Endothelial cell of umbilical vein (primary cell): ENCODE measurements at regions of chr5 and their contacts with region 1.

Region 1: DNA sequence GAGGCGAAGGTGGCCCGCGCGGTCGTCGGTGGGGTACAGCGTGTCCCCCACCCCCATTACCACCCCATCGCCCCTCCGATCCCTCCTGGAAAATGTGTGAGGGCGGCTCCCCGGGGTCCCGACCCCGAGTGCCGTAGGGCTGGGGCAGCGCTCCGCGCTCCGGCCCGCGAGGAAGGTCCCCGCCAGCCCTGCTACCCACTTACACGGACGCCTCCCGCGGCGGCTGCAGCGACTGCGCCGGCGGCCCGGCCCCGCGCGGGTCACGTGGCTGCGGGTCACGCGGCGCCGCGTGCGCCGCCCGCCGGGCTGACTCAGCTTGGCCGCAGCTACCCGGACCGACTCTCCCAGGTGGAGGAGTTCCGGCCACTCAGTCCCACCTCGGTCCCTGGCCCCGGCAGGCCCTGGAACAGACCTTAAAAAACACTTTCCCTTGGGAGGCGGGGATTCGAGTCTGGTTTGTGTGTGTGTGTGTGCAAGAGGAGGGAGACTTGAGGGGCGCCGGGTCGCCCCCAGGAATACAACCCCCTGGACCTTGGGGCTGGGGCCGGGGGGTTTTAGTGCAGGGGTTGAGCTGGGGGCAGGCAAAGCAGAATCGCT is at the start of gene GNPDA1:
- DNase-seq: peak; percentile 67
- H3K4me3 ChIP-seq: peak within 1 kb of the TSS; percentile 51 to 80 (median 69)
- H3K27ac ChIP-seq: peak within 1 kb of the TSS; percentile 83
- H3K4me1 ChIP-seq: peaks cover 45% of the 10 kb centered on the region
- H3K27me3 ChIP-seq: no peaks in the 10 kb centered on the region
- CTCF ChIP-seq: peak in 1 of 2 donors; percentile 9
- POLR2A ChIP-seq: peak; percentile 88
- total RNA-seq, gene GNPDA1: 49.3 and 52.1 TPM in 2 replicates

Region 2: DNA sequence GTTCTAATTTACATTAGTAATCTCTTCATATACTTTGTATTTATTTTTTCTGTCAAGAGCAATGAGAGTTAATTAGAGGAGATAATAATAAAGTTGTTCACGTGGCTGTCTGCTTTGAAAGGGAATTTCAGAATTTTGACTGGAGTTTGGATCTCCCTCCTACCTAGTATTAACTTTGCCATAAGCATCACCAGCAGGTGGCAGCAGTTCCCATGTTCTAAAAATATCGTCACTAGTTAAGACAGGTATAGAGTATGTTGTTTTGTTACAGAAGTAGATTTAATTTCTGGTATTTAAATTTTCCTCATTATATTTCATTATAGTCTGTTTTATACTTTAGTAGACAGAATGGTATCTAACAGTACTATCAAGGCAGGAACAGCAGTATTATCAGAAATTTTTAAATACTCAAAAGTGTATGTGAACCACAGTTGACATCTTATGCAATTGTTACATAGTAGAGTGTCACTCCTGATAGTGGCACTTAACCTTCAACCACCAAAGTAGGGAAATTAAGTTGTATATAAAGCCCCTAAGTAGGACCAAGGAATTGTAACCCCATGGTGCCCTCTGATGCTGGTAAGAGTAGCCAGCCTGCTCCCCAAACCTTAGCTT is 20.4 kb before region 1 on chr5:
- CTCF ChIA-PET with region 1: interaction called, 22 read pairs
- POLR2A ChIA-PET with region 1: interaction called, 3 read pairs
- dilution Hi-C with region 1: no loop called
- intact Hi-C with region 1: no loop called
- DNase-seq: peak; percentile 72
- H3K4me3 ChIP-seq: no peak overlapping the region
- H3K27ac ChIP-seq: no peak overlapping the region
- H3K4me1 ChIP-seq: no peaks in the 10 kb centered on the region
- H3K27me3 ChIP-seq: no peaks in the 10 kb centered on the region
- CTCF ChIP-seq: peak; percentile 45 to 58
- POLR2A ChIP-seq: no peak

Region 3: DNA sequence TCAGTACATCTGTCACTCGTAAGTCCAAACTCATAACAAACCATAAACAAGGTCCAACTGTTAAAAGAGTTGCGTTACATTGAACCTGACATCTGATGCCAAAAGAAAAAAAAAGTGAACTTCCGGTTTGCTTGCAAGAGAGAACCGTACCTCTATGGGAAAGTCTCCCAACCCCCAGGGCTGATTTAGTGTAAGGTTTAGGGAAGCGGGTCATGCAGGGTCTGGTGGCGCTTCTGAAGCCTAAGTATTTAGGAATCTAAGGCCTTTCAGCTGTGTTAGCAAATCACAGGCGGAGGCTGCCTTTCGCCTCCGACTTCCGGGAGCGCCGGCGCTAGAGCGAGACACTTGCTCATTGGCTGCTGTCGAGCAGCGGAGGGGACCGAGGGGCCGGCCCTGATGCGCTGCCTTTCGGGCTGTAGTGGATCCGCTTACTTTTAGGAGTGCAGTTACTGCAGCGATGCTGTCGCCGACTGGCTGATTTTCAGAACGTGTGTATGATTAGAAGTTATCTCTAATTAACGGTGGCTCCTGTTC is 11.9 kb after region 1 on chr5:
- CTCF ChIA-PET with region 1: interaction called, 10 read pairs
- POLR2A ChIA-PET with region 1: no interaction called
- dilution Hi-C with region 1: no loop called
- intact Hi-C with region 1: loop called (anchors 1 kb)
- DNase-seq: peak; percentile 80
- H3K4me3 ChIP-seq: peak overlapping the region; percentile 21 to 64 (median 28)
- H3K27ac ChIP-seq: peak overlapping the region; percentile 59
- H3K4me1 ChIP-seq: peaks cover 8% of the 10 kb centered on the region
- H3K27me3 ChIP-seq: no peaks in the 10 kb centered on the region
- CTCF ChIP-seq: no peak
- POLR2A ChIP-seq: peak; percentile 73

Region 4: GRCh38 chr5:142069606-142070399 is 56.9 kb after region 1 on chr5:
- CTCF ChIA-PET with region 1: no interaction called
- POLR2A ChIA-PET with region 1: no interaction called
- dilution Hi-C with region 1: no loop called
- intact Hi-C with region 1: no loop called
- DNase-seq: no peak
- H3K4me3 ChIP-seq: no peak overlapping the region
- H3K27ac ChIP-seq: no peak overlapping the region
- H3K4me1 ChIP-seq: no peaks in the 10 kb centered on the region
- H3K27me3 ChIP-seq: peaks cover 8 to 10% of the 10 kb centered on the region in 2 experiments
- CTCF ChIP-seq: no peak
- POLR2A ChIP-seq: no peak

Region 5: GRCh38 chr5:142108432-142109330 is 95.8 kb after region 1 on chr5 and contains the start of gene NDFIP1:
- CTCF ChIA-PET with region 1: interaction called, 53 read pairs
- POLR2A ChIA-PET with region 1: interaction called, 7 read pairs
- dilution Hi-C with region 1: no loop called
- intact Hi-C with region 1: loop called (anchors 1 kb)
- DNase-seq: peak; percentile 85
- H3K4me3 ChIP-seq: peak within 1 kb of the TSS; percentile 64 to 84 (median 80)
- H3K27ac ChIP-seq: peak within 1 kb of the TSS; percentile 75
- H3K4me1 ChIP-seq: peaks cover 14% of the 10 kb centered on the region
- H3K27me3 ChIP-seq: no peaks in the 10 kb centered on the region
- CTCF ChIP-seq: no peak
- POLR2A ChIP-seq: peak; percentile 88
- total RNA-seq, gene NDFIP1: 40.3 and 42.6 TPM in 2 replicates

Region 6: DNA sequence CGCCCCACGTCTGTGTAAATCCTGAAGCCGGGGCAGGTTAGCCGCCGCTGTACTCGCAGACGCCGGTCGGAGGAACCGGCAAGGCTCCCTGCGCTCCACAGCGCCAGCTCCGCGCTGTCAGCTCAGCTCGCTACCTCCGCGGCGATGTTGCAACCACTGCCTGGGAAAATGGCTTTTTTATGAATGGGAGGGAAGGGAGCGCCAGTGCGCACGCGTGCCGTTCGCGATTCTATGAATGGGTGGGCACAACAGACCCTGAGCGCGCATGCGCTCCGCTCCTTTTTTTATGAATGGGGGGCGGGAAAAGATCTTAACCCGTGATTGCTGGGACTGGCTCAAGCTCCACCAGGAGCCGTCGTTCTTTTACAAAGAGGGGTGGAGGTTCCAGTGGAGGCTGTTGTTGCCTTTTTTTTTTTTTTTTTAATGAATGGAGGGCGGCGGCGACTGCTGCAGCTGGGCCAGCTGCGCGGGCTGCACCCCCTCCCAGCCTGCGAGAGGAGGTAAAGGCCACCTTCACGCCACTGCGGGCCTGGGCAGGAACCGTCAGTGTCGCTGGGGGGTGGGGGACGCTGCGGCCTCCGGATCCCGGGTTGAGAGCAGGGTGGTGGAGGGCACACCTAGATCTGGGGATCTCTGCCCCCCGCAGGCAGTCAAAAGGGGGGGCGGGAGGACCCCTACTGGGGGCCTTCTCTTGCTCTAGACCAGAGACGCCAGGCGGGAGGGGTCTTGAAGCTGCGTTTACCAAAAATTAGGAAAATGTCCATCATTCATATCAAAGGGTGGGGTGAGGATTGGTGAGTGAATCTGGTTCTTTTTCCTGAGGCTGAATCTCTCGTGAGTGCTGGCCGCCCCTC is 312.2 kb after region 1 on chr5 and contains the start of gene SPRY4:
- CTCF ChIA-PET with region 1: no interaction called
- POLR2A ChIA-PET with region 1: no interaction called
- dilution Hi-C with region 1: no loop called
- intact Hi-C with region 1: loop called (anchors 10 kb)
- DNase-seq: peak; percentile 98
- H3K4me3 ChIP-seq: peak within 1 kb of the TSS; percentile 76 to 89 (median 81)
- H3K27ac ChIP-seq: peak within 1 kb of the TSS; percentile 88
- H3K4me1 ChIP-seq: peaks cover 48% of the 10 kb centered on the region
- H3K27me3 ChIP-seq: no peaks in the 10 kb centered on the region
- CTCF ChIP-seq: no peak
- POLR2A ChIP-seq: peak; percentile 97
- total RNA-seq, gene SPRY4: 33.9 and 49.5 TPM in 2 replicates